Lower lobe of right lung (tissue), 2 donors: ENCODE measurements at regions of chr20 and their contacts with region 1.

Region 1: DNA sequence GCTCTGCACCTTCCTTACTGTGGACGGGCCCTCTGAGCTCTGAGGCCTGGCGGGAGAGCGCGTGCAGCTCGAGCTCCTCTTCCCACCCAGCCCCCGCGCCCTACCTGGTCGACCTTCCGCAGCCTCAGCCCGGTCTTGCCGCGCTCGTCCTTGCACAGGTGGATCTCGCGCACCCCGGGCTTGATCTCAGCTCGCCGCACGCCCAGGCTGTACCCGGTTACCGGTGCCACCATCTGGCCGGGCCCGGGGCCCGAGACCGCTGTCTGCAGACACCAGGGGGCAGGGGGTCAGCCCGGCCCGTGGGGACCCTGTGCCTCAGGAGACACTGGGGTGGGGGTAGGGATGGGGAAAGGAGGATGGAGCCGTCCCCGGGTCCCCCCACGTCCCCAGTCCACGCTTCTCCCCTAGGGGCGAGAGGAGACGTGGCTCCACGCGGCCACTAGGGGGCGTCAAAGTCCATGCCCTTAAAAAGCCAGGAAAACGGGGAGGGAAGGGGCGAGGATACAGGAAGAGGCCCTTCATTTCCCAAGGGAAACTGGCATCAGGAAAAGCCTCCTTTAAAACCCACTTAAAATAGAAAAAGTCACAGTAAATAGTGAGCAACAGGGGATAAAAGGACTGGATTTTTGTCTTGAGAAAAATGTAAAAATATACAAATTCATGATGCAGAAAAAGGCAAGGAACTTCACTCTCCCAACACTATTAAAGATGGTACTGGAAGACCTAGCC is 15.5 kb downstream of the SDCBP2 start:
- DNase-seq: peak; percentile 78
- ATAC-seq: peak; percentile 86 to 90
- H3K4me3 ChIP-seq: no peak overlapping the region
- H3K27ac ChIP-seq: no peak overlapping the region
- H3K4me1 ChIP-seq: peaks cover 12% of the 10 kb centered on the region
- H3K27me3 ChIP-seq: no peaks in the 10 kb centered on the region
- CTCF ChIP-seq: peak; percentile 97

Region 2: DNA sequence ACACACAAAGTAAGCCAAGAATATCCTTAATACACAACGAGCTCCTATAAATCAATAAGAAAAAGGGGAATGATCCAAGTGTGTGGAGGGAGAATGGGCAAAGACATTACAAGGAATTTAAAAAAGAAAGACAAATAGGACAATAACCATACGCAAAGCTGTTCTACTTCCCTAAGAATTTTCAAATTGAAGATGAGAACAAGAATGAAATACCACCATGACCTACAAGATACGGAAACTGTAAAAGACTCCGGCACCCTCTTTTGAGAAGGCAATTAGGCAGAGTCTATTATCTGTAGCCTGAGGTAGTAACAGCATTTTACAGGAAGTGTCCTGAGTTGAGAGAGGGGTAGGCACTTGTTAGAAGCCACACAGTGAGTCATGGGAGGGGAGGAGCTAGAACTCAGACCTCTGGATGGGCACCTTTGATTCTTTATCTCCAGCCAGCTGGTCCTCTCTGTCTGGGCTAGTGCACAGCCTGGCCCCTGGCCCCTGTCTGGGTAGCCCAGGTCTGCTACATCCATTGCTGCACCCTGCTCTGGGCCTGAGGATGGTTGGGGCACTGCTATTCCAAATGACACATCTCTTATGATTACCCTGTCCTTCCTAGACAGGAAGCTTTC is 326.6 kb before region 1 on chr20:
- intact Hi-C with region 1: no loop called
- DNase-seq: no peak
- ATAC-seq: no peak
- H3K4me3 ChIP-seq: no peak overlapping the region
- H3K27ac ChIP-seq: no peak overlapping the region
- H3K4me1 ChIP-seq: no peaks in the 10 kb centered on the region
- H3K27me3 ChIP-seq: peaks cover 2% of the 10 kb centered on the region
- CTCF ChIP-seq: no peak

Region 3: DNA sequence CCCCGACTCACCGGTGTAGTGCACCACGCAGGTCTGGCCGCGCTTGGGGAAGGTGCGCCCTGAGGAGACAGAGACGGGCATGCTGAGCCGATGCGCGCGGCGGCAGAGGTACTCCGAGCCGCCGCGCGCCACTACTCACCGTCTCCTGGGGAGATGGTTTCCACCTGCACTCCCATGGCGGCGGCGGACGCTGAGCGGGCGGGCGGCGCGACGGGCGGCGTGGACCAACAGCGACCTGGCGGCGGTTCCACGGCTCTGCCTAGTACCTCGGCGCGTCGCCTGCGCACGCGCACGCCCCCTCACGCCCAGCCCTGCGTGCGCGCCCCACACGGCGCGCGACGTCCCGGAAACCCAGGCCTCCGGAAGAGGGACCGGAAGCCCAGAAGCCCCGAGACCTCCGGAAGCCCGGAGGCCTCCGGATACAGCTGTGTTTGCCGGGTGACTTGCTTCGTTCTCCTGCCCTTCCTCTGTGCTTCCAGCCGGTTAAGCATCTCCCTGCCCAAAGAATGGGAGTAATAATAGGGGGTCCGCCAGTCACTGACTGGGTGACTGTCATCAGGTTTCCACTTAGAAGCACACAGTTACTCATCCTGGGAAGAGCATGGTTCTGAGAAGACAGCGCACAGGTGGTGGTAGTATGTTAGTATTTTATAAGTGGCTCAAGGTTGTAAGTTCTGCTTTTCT is 79.6 kb after region 1 on chr20 and contains the start of gene FKBP1A:
- intact Hi-C with region 1: loop called (anchors 10 kb)
- DNase-seq: peak; percentile 95
- ATAC-seq: peak; percentile 96 to 98
- H3K4me3 ChIP-seq: peak within 1 kb of the TSS; percentile 74
- H3K27ac ChIP-seq: peak within 1 kb of the TSS; percentile 87
- H3K4me1 ChIP-seq: peaks cover 53% of the 10 kb centered on the region
- H3K27me3 ChIP-seq: peaks cover 4% of the 10 kb centered on the region
- CTCF ChIP-seq: peak; percentile 41
- total RNA-seq, gene FKBP1A: 291 TPM

Region 4: DNA sequence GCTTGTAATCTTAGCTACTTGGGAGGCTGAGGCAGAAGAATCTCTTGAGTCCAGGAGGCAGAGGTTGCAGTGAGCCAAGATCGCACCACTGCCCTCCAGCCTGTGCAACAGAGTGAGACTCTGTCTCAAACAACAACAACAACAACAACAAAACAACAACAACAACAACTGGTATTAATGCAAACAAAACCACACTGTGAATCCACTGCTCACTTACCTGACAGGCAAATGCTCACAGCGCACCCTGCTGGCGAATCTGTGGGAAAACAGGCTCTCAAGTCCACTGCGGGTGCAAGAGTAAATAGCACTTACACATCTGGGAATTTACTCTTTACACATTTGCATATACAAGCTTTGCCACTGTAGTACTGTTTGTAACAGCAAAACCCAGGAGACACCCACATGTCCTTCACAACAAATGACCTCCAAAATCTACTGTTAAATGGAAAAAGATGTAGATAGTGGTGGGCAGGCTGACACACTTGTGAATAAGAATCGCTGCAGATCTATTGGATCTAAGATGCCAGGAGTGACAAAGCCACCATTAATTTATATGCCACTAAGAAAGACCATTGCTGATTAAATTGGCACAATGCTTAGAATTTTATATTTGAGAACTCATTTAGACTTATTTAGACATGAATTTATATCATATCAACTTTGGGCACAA is 124.0 kb after region 1 on chr20:
- intact Hi-C with region 1: loop called (anchors 5 kb)
- DNase-seq: peak; percentile 82
- ATAC-seq: peak; percentile 71 to 81
- H3K4me3 ChIP-seq: no peak overlapping the region
- H3K27ac ChIP-seq: no peak overlapping the region
- H3K4me1 ChIP-seq: peaks cover 11% of the 10 kb centered on the region
- H3K27me3 ChIP-seq: no peaks in the 10 kb centered on the region
- CTCF ChIP-seq: peak; percentile 86

Region 5: DNA sequence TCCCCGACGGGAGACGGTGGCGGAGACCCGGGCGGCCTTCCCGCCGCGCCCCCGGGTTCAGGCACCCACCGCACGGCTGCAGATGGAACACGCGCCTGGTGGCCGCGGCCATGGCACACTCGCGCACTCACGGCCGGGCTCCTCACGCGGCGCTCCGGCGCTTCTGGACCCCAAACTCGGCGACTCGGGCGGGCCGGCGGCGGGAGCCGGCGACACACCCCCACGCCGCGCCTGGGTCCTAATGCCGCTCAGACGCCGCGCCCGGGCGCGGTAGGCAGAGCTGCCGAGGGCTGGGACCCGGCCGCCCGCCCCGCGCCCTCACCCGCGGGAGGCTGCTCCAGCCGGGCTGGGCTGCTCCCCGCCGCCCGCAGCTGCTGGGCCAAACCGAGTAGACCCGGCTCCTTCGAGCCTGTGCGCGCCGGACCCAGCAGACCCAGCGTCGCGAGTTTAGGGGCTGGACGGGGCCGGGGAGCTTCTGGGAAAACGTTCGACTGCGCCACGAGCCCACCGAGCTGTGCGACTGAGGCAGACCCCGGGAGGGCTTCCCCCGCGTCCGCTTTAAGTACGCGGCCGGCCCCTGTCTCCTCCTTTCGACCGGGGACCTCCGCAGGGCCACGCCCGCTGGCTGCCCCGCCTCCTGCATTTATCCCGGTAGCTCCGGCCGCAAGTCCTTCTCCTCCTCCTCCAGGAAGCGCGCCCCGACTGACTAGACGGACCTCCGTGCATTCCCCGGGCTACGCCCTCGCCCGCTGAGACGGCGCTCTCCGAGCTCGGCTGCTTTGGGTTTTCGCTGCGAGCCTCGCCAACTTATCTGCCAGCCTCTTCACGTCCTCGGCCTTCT is 1925.8 kb after region 1 on chr20 and contains the start of gene SLC4A11:
- intact Hi-C with region 1: no loop called
- DNase-seq: peak; percentile 87
- ATAC-seq: peak; percentile 81 to 87
- H3K4me3 ChIP-seq: peak within 1 kb of the TSS; percentile 73
- H3K27ac ChIP-seq: no peak within 1 kb of the TSS
- H3K4me1 ChIP-seq: peaks cover 15% of the 10 kb centered on the region
- H3K27me3 ChIP-seq: peaks cover 45% of the 10 kb centered on the region
- CTCF ChIP-seq: no peak
- total RNA-seq, gene SLC4A11: 5.0 TPM